Sciatic nerve (tissue), 2 donors: ENCODE measurements at regions of chr6 and their contacts with region 1.

Region 1: GRCh38 chr6:12709116-12709515 is 7.5 kb upstream of the PHACTR1 start:
- DNase-seq: no peak
- ATAC-seq: no peak

Region 2: DNA sequence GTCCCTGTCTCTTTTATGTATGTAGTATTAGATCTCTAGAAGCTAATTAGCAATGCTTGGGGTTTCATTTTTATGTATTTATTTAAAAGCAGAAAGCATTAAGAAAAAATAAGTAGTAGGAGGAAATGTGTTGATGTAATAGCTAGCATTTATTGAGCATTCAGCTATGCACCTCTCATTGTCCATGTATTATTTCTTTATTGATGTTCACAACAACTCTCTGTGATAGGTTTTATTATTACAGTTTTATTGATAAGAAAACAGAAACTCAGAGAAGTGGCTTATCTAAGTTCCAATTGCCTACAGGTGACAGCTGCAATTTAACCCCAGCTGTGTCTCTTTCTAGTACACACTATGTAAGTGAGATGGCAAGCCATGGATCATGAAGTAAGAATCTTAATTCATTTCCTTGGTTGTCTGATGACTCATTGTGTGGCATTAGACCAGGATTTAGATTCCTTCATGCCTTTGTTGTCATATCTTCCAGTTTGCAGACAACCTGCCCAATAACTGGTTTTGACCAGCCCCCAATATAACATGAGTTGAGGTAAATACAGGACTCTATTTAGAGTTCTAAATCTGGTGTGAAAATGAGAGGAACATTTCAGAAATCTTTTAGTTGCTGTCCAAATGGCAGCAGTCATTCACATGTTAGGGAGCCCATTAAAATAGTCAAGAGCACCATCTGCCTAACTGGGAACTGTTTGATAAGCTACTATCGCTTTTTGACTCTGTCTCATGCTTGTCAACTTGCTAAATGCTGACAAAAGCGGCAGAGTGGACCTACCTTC is 163.3 kb before region 1 on chr6:
- intact Hi-C with region 1: loop called (anchors 5 kb)
- DNase-seq: no peak
- ATAC-seq: peak; percentile 60